Tibial artery (tissue), 4 donors: ENCODE measurements at regions of chr17 and their contacts with region 1.

Region 1: DNA sequence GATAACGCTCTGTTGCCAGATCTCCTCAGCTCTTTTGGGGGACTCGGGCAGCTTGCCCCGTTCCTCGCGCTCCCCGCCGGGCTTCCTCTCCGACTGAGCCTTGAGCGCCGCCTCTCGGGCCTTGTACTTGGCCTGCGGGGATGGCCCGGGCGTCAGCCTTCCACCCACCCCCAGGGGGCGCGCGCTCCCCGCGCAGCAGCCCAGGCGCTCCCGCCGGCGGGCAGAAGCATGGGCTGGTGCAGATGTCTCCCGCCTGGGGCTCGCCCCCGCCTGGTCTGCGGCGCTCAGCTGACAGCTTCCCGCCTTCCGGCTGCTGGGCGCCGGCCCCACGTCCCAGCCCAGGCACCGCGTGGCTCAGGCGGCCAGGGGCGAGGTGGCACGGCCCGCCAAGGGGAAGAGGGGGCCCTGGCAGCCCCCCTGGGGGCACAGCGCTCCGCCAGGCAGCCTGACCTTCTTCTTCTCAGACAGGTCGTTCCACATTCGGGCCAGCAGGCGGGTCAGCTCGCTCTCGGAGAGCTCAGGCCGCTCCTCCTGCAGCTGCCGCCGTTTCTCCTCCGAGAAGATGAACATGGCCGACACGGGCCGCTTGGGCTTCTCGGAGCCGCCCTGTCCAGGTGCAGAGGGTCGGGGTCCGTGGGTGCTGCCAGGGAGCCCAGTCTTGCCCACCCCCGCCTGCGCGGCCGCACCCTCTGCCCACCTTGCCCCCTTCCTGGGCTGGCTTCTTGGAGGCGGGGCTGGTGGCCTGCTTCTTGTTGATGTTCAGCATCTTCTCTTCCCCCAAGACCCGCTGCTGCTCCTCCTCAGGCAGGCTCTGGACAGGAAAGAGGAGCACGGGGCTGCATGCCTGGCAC is 8.9 kb downstream of the UBTF start:
- DNase-seq: peak; percentile 84 to 91
- H3K4me3 ChIP-seq: no peak overlapping the region
- H3K27ac ChIP-seq: peak overlapping the region; percentile 17 to 55
- H3K4me1 ChIP-seq: peaks cover 6 to 21% (median 12%) of the 10 kb centered on the region in 4 donors
- H3K27me3 ChIP-seq: no peaks in the 10 kb centered on the region
- CTCF ChIP-seq: peak; percentile 98 to 99

Region 2: DNA sequence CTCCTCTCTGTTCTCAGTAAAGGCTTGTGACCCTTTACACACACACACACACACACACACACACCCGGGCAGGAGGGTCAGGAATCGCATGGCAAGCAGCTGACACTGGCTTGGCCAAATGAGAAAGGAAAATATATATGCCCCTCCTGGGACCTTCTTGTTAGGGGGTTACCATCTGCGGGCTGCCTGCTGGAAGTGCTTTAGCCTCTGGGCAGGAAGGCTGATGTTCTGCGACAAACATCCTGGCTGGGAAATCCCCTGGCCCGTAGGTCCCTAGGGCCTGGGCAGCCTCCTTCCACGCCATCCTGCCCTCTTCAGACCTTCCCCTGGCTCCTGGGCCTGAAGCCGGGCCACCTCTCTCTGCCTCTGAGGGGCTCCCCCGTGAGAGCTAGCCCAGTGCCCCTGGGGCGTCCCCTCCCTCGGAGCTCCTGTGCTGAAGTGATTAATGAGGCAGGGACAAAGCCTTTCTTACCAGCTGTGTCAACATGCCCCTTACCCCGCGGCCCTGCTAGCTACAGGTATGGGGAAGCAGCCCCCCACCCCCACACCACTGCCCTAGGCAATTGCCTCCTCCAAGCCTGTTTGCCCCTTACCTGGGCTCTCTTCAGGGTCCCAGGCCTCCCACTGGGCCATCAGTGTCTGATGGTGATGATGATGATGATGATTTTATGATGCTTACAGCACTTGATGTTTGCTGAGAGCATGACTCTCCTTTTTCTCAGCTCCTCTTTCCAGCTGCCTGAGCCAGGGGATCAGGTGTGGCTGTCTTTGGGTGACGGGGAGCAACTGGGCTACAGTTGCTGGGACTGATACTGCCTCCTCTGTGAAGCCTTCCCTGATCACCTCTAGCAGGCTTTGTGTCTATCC is 631.6 kb before region 1 on chr17:
- intact Hi-C with region 1: no loop called
- DNase-seq: no peak
- H3K4me3 ChIP-seq: no peak overlapping the region
- H3K27ac ChIP-seq: peak overlapping the region in 1 of 2 donors; percentile 11
- H3K4me1 ChIP-seq: peaks cover 0 to 33% (median 20%) of the 10 kb centered on the region in 4 donors
- H3K27me3 ChIP-seq: no peaks in the 10 kb centered on the region
- CTCF ChIP-seq: no peak

Region 3: GRCh38 chr17:43994272-43995149 is 216.1 kb before region 1 on chr17:
- intact Hi-C with region 1: no loop called
- DNase-seq: peak in 1 of 2 donors; percentile 68
- H3K4me3 ChIP-seq: no peak overlapping the region
- H3K27ac ChIP-seq: no peak overlapping the region
- H3K4me1 ChIP-seq: peaks cover 0 to 9% (median 6%) of the 10 kb centered on the region in 4 donors
- H3K27me3 ChIP-seq: peaks cover 0 to 19% of the 10 kb centered on the region in 2 donors
- CTCF ChIP-seq: peak; percentile 61 to 65

Region 4: GRCh38 chr17:44170499-44171201 is 39.9 kb before region 1 on chr17 and contains the start of gene ASB16:
- intact Hi-C with region 1: loop called (anchors 2 kb)
- DNase-seq: peak in 1 of 2 donors; percentile 76
- H3K4me3 ChIP-seq: peak within 1 kb of the TSS; percentile 58 to 61
- H3K27ac ChIP-seq: peak within 1 kb of the TSS; percentile 89
- H3K4me1 ChIP-seq: peaks cover 0 to 35% (median 19%) of the 10 kb centered on the region in 4 donors
- H3K27me3 ChIP-seq: no peaks in the 10 kb centered on the region
- CTCF ChIP-seq: no peak

Region 5: DNA sequence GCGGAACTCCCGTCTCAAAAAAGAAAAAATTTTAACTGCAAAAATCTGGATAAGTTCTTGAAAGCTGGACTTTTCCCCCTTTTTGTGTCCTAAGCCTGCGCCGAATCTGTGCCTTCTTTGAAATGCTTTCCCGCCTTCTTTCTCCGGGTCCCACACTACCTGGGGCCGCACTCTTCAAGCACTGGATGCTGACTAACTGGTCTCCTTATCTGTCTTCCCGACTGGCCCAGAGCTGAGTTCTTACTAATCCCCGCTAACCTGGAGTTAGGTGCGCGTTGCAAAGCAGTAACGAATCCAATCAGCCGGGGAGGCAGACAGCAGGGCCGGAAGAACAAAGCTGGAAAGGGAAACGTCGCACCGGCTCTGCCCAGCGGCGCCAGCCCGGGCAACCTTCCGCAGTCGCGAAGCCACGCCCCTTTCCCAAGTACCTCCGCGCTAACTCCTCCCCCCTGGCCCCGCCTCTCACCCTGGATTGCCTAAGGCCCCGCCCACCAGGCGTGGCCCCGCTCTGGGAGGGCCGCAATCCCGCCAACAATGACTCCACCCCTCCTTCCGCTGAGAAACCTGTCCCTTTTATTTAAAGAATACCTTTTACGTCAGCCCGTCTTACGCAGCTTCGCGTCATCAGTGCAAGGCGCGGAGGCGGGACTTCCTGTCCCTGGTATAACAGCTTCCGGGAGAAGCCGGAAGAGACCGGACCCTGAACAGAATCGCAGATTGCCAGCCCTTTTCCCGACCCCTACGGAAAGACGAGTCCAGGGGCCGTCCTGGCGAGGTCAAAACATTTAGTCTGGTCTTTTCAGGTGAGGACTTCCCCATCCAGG is 24.0 kb before region 1 on chr17 and contains the start of gene TMUB2:
- intact Hi-C with region 1: no loop called
- DNase-seq: peak; percentile 98 to 99
- H3K4me3 ChIP-seq: peak within 1 kb of the TSS; percentile 90 to 94
- H3K27ac ChIP-seq: peak within 1 kb of the TSS; percentile 94 to 99
- H3K4me1 ChIP-seq: peaks cover 0 to 37% (median 29%) of the 10 kb centered on the region in 4 donors
- H3K27me3 ChIP-seq: no peaks in the 10 kb centered on the region
- CTCF ChIP-seq: no peak

Region 6: GRCh38 chr17:44331249-44331760 is 120.7 kb after region 1 on chr17:
- intact Hi-C with region 1: loop called (anchors 2 kb)
- DNase-seq: peak in 1 of 2 donors; percentile 80
- H3K4me3 ChIP-seq: no peak overlapping the region
- H3K27ac ChIP-seq: no peak overlapping the region
- H3K4me1 ChIP-seq: peaks cover 0 to 9% (median 2%) of the 10 kb centered on the region in 4 donors
- H3K27me3 ChIP-seq: peaks cover 0 to 6% of the 10 kb centered on the region in 2 donors
- CTCF ChIP-seq: peak; percentile 78 to 79

Region 7: DNA sequence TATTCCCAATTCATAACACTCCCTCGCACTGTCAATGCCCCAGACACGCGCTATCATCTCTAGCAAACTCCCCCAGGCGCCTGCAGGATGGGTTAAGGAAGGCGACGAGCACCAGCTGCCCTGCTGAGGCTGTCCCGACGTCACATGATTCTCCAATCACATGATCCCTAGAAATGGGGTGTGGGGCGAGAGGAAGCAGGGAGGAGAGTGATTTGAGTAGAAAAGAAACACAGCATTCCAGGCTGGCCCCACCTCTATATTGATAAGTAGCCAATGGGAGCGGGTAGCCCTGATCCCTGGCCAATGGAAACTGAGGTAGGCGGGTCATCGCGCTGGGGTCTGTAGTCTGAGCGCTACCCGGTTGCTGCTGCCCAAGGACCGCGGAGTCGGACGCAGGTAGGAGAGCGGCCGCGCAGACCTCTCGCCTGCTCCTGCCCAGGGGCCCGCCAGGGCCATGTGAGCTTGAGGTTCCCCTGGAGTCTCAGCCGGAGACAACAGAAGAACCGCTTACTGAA is 134.4 kb after region 1 on chr17 and contains the start of gene GRN:
- intact Hi-C with region 1: loop called (anchors 5 kb)
- DNase-seq: peak; percentile 98
- H3K4me3 ChIP-seq: peak within 1 kb of the TSS; percentile 80 to 82
- H3K27ac ChIP-seq: peak within 1 kb of the TSS; percentile 82 to 86
- H3K4me1 ChIP-seq: peaks cover 0 to 18% (median 11%) of the 10 kb centered on the region in 4 donors
- H3K27me3 ChIP-seq: no peaks in the 10 kb centered on the region
- CTCF ChIP-seq: no peak